Calu3 (cell line): ENCODE measurements at regions of chr11 and their contacts with region 1.

Region 1: DNA sequence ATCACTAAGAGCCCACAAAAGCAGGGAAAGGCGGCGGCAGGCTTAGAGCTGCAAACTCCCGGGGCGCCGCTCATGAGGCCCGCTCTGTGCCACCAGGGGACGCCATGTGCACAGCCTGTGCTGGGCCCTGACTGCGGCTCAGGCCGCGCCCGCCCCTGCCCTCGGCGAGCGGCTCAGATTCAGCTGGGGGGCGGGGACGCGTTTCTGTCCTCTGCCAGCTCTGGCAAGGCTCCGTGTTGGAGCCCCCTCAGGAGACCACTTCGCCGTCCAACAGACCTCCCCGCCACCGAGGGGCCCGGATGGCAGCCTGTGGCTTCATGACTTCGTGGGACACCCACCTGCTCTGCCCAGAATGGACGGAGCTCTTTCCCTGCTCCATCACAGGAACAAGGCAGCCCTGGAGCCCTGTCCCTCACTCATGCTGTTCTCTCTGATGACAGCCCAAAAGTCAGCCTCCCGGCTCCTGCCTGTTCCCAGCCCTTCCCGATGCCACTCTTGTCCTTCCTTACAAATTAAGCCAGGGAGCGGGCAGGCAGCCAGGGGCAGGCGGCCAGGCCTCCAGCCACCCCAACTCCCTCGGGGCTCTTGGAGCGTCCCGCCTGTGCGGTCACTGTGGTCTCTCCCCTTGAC is 69.1 kb downstream of the NAT10 start:
- DNase-seq: peak; percentile 91
- H3K4me3 Mint-ChIP-seq: peak overlapping the region; percentile 69
- H3K27ac Mint-ChIP-seq: peak overlapping the region; percentile 45
- H3K4me1 Mint-ChIP-seq: peaks cover 18% of the 10 kb centered on the region
- H3K27me3 Mint-ChIP-seq: no peaks in the 10 kb centered on the region
- CTCF ChIP-seq: peak; percentile 95

Region 2: GRCh38 chr11:34004226-34004625 is 170.3 kb before region 1 on chr11:
- CTCF ChIA-PET with region 1: no interaction called
- intact Hi-C with region 1: no loop called
- DNase-seq: no peak
- H3K4me3 Mint-ChIP-seq: no peak overlapping the region
- H3K27ac Mint-ChIP-seq: no peak overlapping the region
- H3K4me1 Mint-ChIP-seq: peaks cover 11% of the 10 kb centered on the region
- H3K27me3 Mint-ChIP-seq: no peaks in the 10 kb centered on the region
- CTCF ChIP-seq: no peak

Region 3: GRCh38 chr11:34091825-34092224 is 82.7 kb before region 1 on chr11:
- CTCF ChIA-PET with region 1: no interaction called
- intact Hi-C with region 1: no loop called
- DNase-seq: no peak
- H3K4me3 Mint-ChIP-seq: no peak overlapping the region
- H3K27ac Mint-ChIP-seq: no peak overlapping the region
- H3K4me1 Mint-ChIP-seq: no peaks in the 10 kb centered on the region
- H3K27me3 Mint-ChIP-seq: no peaks in the 10 kb centered on the region
- CTCF ChIP-seq: no peak

Region 4: GRCh38 chr11:34161812-34162499 is 12.6 kb before region 1 on chr11:
- CTCF ChIA-PET with region 1: no interaction called
- intact Hi-C with region 1: no loop called
- DNase-seq: no peak
- H3K4me3 Mint-ChIP-seq: no peak overlapping the region
- H3K27ac Mint-ChIP-seq: no peak overlapping the region
- H3K4me1 Mint-ChIP-seq: peaks cover 3% of the 10 kb centered on the region
- H3K27me3 Mint-ChIP-seq: no peaks in the 10 kb centered on the region
- CTCF ChIP-seq: no peak

Region 5: GRCh38 chr11:34208266-34209135 is 34.0 kb after region 1 on chr11:
- CTCF ChIA-PET with region 1: interaction called, 16 read pairs
- intact Hi-C with region 1: no loop called
- DNase-seq: peak; percentile 59
- H3K4me3 Mint-ChIP-seq: peak overlapping the region; percentile 1
- H3K27ac Mint-ChIP-seq: peak overlapping the region; percentile 16
- H3K4me1 Mint-ChIP-seq: peaks cover 50% of the 10 kb centered on the region
- H3K27me3 Mint-ChIP-seq: no peaks in the 10 kb centered on the region
- CTCF ChIP-seq: no peak

Region 6: DNA sequence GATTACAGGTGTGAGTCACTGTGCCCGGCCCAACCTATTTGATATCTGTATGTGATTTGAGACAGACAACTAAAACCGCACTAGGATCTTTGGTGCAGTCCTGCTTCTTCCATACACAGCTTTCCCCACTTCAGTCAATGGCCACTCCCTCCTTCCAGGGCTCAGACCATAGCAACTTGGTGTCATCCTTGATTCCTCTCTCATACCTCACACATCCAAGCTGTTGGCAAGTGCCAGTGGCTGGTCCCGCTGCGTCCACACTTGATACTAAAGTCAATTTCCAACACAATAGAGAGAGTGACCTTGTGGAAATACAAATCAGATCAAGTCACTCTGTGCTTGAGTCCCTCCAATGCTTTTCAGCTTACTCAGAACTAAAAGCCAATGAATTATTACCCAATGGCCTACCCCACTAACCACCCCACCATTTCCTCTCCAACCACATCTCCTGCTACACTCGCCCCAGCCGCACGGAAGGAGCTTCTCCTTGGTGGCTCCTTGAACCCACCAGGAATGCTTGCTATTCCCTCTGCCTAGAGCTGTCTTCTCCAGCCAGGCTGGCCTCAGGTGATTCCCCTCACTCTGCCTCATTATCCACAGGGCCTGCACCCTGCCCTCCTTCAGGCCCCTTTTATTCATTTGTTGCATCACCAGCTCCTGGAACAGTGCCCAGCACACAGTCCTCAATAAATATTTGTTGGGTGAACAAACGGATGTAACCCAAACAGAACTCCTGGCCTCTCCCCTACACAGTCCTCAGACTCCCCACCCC is 170.4 kb after region 1 on chr11:
- CTCF ChIA-PET with region 1: interaction called, 22 read pairs
- intact Hi-C with region 1: no loop called
- DNase-seq: peak; percentile 82
- H3K4me3 Mint-ChIP-seq: peak overlapping the region; percentile 52
- H3K27ac Mint-ChIP-seq: peak overlapping the region; percentile 92
- H3K4me1 Mint-ChIP-seq: peaks cover 84% of the 10 kb centered on the region
- H3K27me3 Mint-ChIP-seq: no peaks in the 10 kb centered on the region
- CTCF ChIP-seq: no peak